B cell (primary cell): ENCODE measurements at regions of chr14 and their contacts with region 1.

Region 1: GRCh38 chr14:102870994-102871831 is 51.2 kb upstream of the AMN start:
- DNase-seq: no peak
- ATAC-seq: no peak
- H3K4me3 ChIP-seq: no peak overlapping the region
- H3K4me3 Mint-ChIP-seq: no peak overlapping the region
- H3K27ac ChIP-seq: no peak overlapping the region
- H3K27ac Mint-ChIP-seq: no peak overlapping the region
- H3K4me1 ChIP-seq: peaks cover 11 to 22% of the 10 kb centered on the region in 2 donors
- H3K4me1 Mint-ChIP-seq: peaks cover 18% of the 10 kb centered on the region
- H3K27me3 ChIP-seq: no peaks in the 10 kb centered on the region
- H3K27me3 Mint-ChIP-seq: no peaks in the 10 kb centered on the region
- CTCF ChIP-seq: no peak

Region 2: DNA sequence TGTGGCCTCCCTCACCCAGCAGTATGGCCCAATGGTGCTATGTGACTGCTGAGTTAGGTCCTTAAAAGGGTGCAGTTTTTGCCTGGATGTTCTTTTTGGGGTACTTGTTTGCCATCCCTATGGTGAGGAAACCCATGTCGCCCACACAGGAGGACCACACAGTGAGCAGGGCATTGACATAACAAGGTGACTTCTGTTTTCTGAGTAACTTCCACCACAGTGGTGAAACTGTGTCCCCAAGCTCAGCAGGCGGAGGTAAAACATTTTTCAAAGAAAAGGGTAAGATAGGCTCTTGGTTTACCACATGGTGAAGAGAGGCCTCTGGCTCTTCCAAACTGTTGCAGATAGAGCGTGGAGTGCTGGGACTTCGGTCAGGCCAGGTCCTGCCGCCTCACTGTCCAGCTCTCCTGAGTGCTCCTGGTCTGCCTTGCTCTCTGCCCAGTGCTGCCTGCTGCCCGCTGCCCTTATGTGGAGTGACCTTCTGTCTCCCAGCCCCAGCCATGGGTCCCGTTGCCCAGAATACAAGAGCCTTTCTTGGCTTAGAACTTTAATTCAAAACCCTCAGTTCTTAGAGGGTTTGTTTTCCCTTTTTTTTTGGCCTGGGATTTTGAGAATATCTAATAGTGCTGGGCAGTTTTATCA is 39.9 kb before region 1 on chr14:
- CTCF ChIA-PET with region 1: no interaction called
- POLR2A ChIA-PET with region 1: no interaction called
- intact Hi-C with region 1: loop called (anchors 5 kb)
- DNase-seq: no peak
- ATAC-seq: no peak
- H3K4me3 ChIP-seq: no peak overlapping the region
- H3K4me3 Mint-ChIP-seq: no peak overlapping the region
- H3K27ac ChIP-seq: no peak overlapping the region
- H3K27ac Mint-ChIP-seq: no peak overlapping the region
- H3K4me1 ChIP-seq: peaks cover 0 to 3% of the 10 kb centered on the region in 2 donors
- H3K4me1 Mint-ChIP-seq: peaks cover 46% of the 10 kb centered on the region
- H3K27me3 ChIP-seq: no peaks in the 10 kb centered on the region
- H3K27me3 Mint-ChIP-seq: no peaks in the 10 kb centered on the region
- CTCF ChIP-seq: no peak